Left cardiac atrium (tissue), 4 donors: ENCODE measurements at regions of chr1 and their contacts with region 1.

Region 1: GRCh38 chr1:160193091-160193819 is 2.9 kb downstream of the CASQ1 start:
- DNase-seq: peak; percentile 89
- ATAC-seq: peak; percentile 80 to 86

Region 2: GRCh38 chr1:159989581-159989980 is 203.7 kb before region 1 on chr1:
- intact Hi-C with region 1: no loop called
- DNase-seq: no peak
- ATAC-seq: no peak

Region 3: GRCh38 chr1:160113407-160113806 is 79.8 kb before region 1 on chr1:
- intact Hi-C with region 1: loop called in 1 of 2 experiments (anchors 1 kb)
- DNase-seq: no peak
- ATAC-seq: no peak

Region 4: GRCh38 chr1:160221089-160221488 is 27.8 kb after region 1 on chr1:
- intact Hi-C with region 1: loop called in 1 of 2 experiments (anchors 2 kb)
- DNase-seq: no peak
- ATAC-seq: no peak

Region 5: GRCh38 chr1:160251687-160252526 is 58.7 kb after region 1 on chr1:
- intact Hi-C with region 1: loop called (anchors 2 to 10 kb)
- DNase-seq: peak; percentile 75
- ATAC-seq: peak; percentile 90 to 96

Region 6: DNA sequence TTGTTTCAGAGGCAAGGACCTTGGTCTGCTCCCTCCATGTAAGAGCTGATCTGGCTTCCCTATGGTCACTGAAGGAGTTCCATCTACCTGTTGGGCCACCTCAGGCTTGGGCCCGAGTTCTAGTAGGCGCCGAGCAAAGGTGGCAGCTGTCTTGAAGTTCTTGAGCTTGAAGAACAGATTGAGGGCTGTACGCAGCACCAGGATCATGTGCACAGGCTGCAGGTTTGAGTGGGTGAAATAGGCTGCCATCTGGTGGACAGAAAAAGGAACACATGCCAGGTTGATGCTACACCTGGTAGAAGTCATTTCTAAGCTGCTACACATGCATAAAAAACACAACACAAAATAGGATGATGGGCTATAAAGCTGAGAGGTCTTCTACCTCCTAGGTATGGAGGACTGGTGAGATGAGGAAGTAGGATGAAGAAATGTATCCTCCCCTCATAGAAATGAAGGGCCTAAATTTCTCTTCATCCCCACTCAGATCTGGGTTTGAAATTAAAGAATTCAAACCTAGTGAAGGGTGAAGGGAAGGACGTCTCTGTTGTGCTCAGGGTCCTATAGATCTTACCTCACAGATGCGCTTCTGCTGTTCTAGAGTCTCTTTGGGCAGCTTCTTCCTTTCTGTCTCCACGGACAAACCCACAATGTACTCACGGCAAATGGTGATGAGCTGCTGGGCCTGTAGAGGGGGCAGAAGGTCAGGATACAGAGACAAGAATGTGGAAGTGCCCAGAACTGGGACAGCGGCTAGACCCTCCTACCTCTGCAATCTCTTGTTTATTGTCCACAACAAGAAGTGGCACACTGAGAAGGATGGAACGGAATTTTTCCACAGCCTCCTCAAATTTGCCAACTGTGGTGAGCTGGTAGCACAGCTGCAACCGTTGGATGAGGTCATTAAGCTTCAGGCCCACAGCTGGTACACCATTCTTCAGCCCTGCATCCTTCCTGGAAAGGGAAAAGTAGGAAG is 98.3 kb after region 1 on chr1:
- intact Hi-C with region 1: loop called in 1 of 2 experiments (anchors 2 kb)
- DNase-seq: peak; percentile 53
- ATAC-seq: peak; percentile 84 to 86

Region 7: DNA sequence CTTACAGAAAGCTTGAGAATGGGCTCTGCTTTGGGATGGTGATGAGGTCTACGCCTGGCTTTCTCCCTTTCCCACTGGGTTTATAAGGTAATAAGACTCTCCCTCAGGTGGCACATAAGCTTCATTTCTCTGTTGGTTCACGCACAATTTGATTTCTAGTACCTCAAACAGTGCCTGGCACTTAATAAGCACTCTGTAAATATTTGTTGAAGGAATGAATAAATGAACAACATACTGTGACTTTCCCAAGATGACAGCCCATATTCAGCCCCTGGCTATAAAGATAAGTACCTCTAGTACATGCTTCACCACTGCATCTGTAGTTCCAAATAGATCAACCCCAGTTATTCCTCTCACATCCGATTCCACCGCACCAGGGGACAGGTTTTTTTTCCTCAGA is 132.0 kb after region 1 on chr1:
- intact Hi-C with region 1: no loop called
- DNase-seq: no peak
- ATAC-seq: no peak

Region 8: GRCh38 chr1:160376525-160377131 is 183.4 kb after region 1 on chr1:
- intact Hi-C with region 1: loop called in 1 of 2 experiments (anchors 5 kb)
- DNase-seq: no peak
- ATAC-seq: peak; percentile 86 to 90